Gastrocnemius medialis (tissue), 4 donors: ENCODE measurements at regions of chr10 and their contacts with region 1.

Region 1: DNA sequence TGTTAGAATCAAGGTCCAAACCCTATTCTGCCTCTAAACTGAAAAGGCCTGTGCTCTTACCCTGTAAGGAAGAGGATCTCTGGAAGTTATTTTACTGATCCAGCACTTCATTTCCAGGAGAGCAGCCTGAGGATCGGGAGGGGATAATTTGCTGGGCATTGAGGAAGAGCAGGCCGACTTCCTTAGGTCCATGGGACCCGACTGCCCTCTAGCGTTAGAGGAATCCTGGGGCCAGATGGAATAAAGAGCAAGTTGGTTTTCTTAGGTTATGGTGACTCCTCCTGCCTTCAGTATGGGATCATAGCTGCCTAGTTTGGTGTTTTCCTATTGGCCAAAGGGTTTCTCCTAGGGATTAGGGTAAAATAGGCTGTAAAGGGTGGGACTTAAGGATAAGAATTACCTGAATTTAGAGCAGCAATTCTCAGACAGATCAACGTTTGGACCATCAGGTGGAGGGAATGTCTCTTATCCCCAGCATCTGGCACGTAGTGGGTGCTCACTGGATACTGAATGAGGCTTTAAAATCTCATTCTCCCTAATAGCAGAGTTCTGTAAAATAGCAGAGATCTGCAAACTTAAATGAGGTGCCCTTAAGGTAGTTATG is 40.0 kb upstream of the SORBS1 start:
- DNase-seq: peak; percentile 70 to 81
- ATAC-seq: peak; percentile 96 to 99
- H3K4me3 ChIP-seq: no peak overlapping the region
- H3K27ac ChIP-seq: peak overlapping the region in 2 of 4 donors; percentile 21 to 42
- H3K4me1 ChIP-seq: peaks cover 10 to 16% of the 10 kb centered on the region in 2 donors
- H3K27me3 ChIP-seq: no peaks in the 10 kb centered on the region
- CTCF ChIP-seq: peak; percentile 89 to 96 (median 90)
- POLR2A ChIP-seq: no peak

Region 2: GRCh38 chr10:95183271-95184230 is 417.7 kb before region 1 on chr10:
- in situ Hi-C with region 1: no loop called
- intact Hi-C with region 1: loop called (anchors 10 kb)
- DNase-seq: peak; percentile 42 to 53
- ATAC-seq: peak; percentile 91 to 92
- H3K4me3 ChIP-seq: peak overlapping the region; percentile 57 to 79 (median 69)
- H3K27ac ChIP-seq: peak overlapping the region; percentile 45 to 73 (median 64)
- H3K4me1 ChIP-seq: peaks cover 0 to 8% of the 10 kb centered on the region in 2 donors
- H3K27me3 ChIP-seq: no peaks in the 10 kb centered on the region
- CTCF ChIP-seq: peak; percentile 62 to 91 (median 86)
- POLR2A ChIP-seq: no peak

Region 3: GRCh38 chr10:95208702-95209391 is 392.4 kb before region 1 on chr10:
- in situ Hi-C with region 1: loop called in 1 of 4 experiments (anchors 25 kb)
- intact Hi-C with region 1: no loop called
- DNase-seq: no peak
- ATAC-seq: no peak
- H3K4me3 ChIP-seq: no peak overlapping the region
- H3K27ac ChIP-seq: no peak overlapping the region
- H3K4me1 ChIP-seq: no peaks in the 10 kb centered on the region
- H3K27me3 ChIP-seq: no peaks in the 10 kb centered on the region
- CTCF ChIP-seq: peak in 1 of 5 experiments; percentile 19
- POLR2A ChIP-seq: no peak

Region 4: DNA sequence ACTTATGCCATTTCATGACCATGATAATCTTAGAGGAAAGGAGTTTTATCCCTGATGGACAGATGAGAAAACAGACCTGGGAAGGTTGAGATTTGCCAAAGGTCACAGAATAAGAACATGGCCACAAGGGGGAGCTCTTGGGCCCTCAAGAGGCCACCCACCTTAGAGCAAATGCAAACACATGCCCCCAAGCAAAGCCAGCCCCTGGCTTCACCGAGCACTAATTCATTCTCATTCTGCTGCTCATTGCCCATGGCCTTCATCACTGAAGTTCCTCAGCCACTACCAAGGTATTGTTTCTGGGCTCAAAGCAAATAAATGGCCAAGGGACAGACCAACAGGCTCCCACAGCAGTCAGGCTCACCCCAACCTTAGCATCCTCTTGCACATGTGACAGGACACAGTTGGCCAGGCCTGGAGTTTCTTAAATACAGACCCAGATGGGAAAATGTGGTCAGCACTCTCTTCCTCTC is 354.6 kb before region 1 on chr10:
- in situ Hi-C with region 1: loop called in 1 of 4 experiments (anchors 25 kb)
- intact Hi-C with region 1: no loop called
- DNase-seq: peak; percentile 52 to 64
- ATAC-seq: peak; percentile 40 to 65
- H3K4me3 ChIP-seq: no peak overlapping the region
- H3K27ac ChIP-seq: peak overlapping the region; percentile 72 to 85 (median 78)
- H3K4me1 ChIP-seq: peaks cover 50 to 74% of the 10 kb centered on the region in 2 donors
- H3K27me3 ChIP-seq: no peaks in the 10 kb centered on the region
- CTCF ChIP-seq: peak; percentile 72 to 87 (median 83)
- POLR2A ChIP-seq: no peak

Region 5: GRCh38 chr10:95430231-95430951 is 170.8 kb before region 1 on chr10:
- in situ Hi-C with region 1: loop called (anchors 5 kb)
- intact Hi-C with region 1: loop called (anchors 1 kb)
- DNase-seq: peak; percentile 46 to 58
- ATAC-seq: peak; percentile 85 to 91
- H3K4me3 ChIP-seq: no peak overlapping the region
- H3K27ac ChIP-seq: peak overlapping the region; percentile 57 to 73 (median 66)
- H3K4me1 ChIP-seq: peaks cover 23 to 43% of the 10 kb centered on the region in 2 donors
- H3K27me3 ChIP-seq: no peaks in the 10 kb centered on the region
- CTCF ChIP-seq: peak; percentile 93 to 99 (median 95)
- POLR2A ChIP-seq: no peak